GM12878 (cell line): ENCODE measurements at regions of chr6 and their contacts with region 1.

Region 1: DNA sequence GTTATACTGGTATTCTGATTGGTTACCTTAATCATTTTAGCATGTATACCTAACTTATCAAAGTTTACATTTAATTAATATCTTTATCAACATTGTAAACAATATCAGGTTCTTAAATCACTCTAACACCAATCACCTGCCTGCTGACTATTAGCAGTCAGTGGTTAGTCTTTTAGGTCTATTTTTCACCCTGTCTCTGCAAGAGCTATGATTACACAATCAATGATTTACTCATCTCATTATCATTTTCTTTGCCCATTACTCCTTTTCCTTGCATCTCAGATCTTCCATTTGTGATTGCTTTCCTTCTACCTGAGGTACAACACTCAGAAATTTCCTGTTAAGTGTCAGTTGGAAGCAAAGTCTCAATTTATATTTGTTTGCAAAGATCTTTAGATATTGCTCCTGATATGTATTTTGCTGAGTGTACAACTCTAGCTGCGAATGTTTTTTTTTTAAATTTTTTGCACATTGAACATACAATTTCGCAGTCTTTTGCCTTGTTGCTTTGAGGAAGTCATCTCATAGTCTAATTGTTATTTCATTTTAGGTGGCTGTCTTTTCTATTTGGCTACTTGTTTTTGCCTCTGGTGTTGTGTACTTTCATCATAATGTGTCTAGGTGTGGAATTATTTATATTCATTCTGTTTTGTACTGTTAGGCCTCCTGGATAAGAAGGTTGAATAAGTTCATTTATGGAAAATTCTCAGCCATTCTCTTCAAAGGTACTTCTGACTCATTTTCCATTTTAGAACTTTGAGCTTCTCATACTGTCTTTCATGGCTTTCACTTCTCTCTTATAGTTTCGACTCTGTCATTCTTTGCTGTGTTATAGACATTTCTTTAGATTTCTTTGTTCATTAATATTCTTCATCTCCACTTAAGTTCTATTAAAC is 104.9 kb upstream of the CEP162 start:
- DNase-seq: peak; percentile 24
- ATAC-seq: peak; percentile 97
- H3K4me3 ChIP-seq: no peak overlapping the region
- H3K27ac ChIP-seq: peak overlapping the region; percentile 38; the same call in 1 of the 2 replicates
- H3K4me1 ChIP-seq: peaks cover 6% of the 10 kb centered on the region; the same call in 1 of the 2 replicates
- H3K27me3 ChIP-seq: no peaks in the 10 kb centered on the region
- CTCF ChIP-seq: no peak
- EP300 ChIP-seq: peak; percentile 53 to 83
- POLR2A ChIP-seq: no peak
- RAD21 ChIP-seq: no peak

Region 2: DNA sequence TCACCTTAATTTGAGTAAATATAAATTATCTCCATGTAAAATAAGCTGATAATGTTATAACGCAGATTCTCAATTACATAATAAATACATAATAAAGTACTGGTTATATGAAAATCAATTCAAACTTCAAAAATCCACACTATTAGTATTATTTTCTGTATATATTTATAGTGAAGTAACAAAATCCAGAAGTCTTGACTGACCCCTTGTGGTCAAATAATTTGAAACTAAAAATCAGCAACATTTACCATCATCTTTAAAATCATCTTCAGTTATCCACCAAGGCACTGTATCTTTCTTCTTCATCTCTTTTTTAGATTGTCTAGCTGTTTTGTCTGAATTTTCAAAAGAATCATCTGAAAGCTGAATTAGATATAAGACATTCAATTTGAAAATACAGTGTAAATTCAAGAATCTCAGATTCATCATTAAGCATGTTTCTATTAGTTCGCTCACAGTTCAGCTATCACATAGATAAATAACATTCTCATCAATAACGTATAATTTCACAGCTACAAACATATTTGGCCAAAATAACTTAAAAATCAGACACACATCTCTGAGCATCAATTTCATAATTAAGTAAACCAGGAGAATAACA is 111.5 kb before region 1 on chr6:
- CTCF ChIA-PET with region 1: no interaction called
- POLR2A ChIA-PET with region 1: no interaction called
- RAD21 ChIA-PET with region 1: no interaction called
- SMC1A ChIA-PET with region 1: no interaction called
- in situ Hi-C with region 1: no loop called
- intact Hi-C with region 1: no loop called
- DNase-seq: no peak
- ATAC-seq: 0 out of 3 replicates have a peak, but pooled peaks have one; percentile 39
- H3K4me3 ChIP-seq: no peak overlapping the region
- H3K27ac ChIP-seq: no peak overlapping the region
- H3K4me1 ChIP-seq: no peaks in the 10 kb centered on the region
- H3K27me3 ChIP-seq: no peaks in the 10 kb centered on the region
- CTCF ChIP-seq: peak; percentile 30 to 52 (median 36); a peak in 3 of 6 replicates
- EP300 ChIP-seq: no peak
- POLR2A ChIP-seq: no peak
- RAD21 ChIP-seq: peak; percentile 64

Region 3: DNA sequence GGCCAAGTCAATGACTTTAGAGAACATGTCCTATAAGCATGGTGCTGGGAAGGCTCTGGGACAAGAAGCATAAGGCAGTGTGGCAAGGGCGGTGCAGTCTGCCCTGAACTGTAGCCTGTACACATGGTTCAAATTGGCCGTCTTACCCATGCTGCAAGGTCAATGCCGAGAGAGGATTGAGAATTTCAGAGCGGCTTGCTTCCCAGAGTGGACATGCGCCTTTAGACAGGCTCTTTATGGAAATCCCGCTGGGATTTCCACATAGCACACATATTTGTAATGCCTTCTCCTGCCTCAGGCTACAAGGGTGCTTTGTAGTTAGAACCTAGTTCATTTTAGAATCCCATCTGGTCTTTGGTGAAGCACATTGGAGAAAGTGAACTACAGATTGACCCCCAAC is 68.8 kb before region 1 on chr6:
- CTCF ChIA-PET with region 1: no interaction called
- POLR2A ChIA-PET with region 1: no interaction called
- RAD21 ChIA-PET with region 1: no interaction called
- SMC1A ChIA-PET with region 1: no interaction called
- in situ Hi-C with region 1: no loop called
- intact Hi-C with region 1: no loop called
- DNase-seq: no peak
- ATAC-seq: no peak
- H3K4me3 ChIP-seq: no peak overlapping the region
- H3K27ac ChIP-seq: no peak overlapping the region
- H3K4me1 ChIP-seq: no peaks in the 10 kb centered on the region
- H3K27me3 ChIP-seq: peaks cover 0 to 3% of the 10 kb centered on the region in 2 experiments; a peak in 2 of 4 replicates
- CTCF ChIP-seq: no peak
- EP300 ChIP-seq: no peak
- POLR2A ChIP-seq: no peak
- RAD21 ChIP-seq: no peak

Region 4: DNA sequence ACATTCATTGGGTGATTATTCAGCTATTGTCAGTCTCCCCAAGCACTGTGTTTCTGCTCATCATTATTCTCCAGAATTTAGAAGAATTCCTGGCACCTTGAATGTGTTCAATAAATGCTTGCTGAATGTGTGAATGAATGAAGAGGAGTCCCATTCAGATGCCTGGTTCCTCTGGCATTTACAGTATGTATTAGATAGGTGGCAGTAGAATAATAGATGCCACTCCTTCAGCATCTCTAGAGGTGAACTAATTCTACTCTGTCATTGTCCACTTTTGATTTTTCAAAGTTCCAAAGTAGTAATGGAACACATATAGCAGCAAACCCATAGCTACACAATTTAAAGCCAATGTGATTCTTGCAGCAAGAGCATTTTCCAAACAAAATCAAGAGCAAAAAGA is 14.0 kb after region 1 on chr6:
- CTCF ChIA-PET with region 1: interaction called, 5 read pairs
- POLR2A ChIA-PET with region 1: interaction called, 3 read pairs
- RAD21 ChIA-PET with region 1: interaction called, 6 read pairs
- SMC1A ChIA-PET with region 1: interaction called, 21 read pairs
- in situ Hi-C with region 1: no loop called
- intact Hi-C with region 1: no loop called
- DNase-seq: no peak
- ATAC-seq: peak; percentile 33; the same call in 1 of the 3 replicates
- H3K4me3 ChIP-seq: no peak overlapping the region
- H3K27ac ChIP-seq: no peak overlapping the region
- H3K4me1 ChIP-seq: no peaks in the 10 kb centered on the region
- H3K27me3 ChIP-seq: no peaks in the 10 kb centered on the region
- CTCF ChIP-seq: no peak; a peak in 1 of 6 replicates
- EP300 ChIP-seq: no peak
- POLR2A ChIP-seq: no peak
- RAD21 ChIP-seq: no peak

Region 5: GRCh38 chr6:84356907-84357306 is 24.5 kb after region 1 on chr6:
- CTCF ChIA-PET with region 1: interaction called, 4 read pairs
- POLR2A ChIA-PET with region 1: no interaction called
- RAD21 ChIA-PET with region 1: interaction called, 14 read pairs
- SMC1A ChIA-PET with region 1: interaction called, 7 read pairs
- in situ Hi-C with region 1: no loop called
- intact Hi-C with region 1: no loop called
- DNase-seq: no peak
- ATAC-seq: no peak
- H3K4me3 ChIP-seq: no peak overlapping the region
- H3K27ac ChIP-seq: no peak overlapping the region
- H3K4me1 ChIP-seq: no peaks in the 10 kb centered on the region
- H3K27me3 ChIP-seq: no peaks in the 10 kb centered on the region
- CTCF ChIP-seq: no peak
- EP300 ChIP-seq: no peak
- POLR2A ChIP-seq: no peak
- RAD21 ChIP-seq: no peak

Region 6: DNA sequence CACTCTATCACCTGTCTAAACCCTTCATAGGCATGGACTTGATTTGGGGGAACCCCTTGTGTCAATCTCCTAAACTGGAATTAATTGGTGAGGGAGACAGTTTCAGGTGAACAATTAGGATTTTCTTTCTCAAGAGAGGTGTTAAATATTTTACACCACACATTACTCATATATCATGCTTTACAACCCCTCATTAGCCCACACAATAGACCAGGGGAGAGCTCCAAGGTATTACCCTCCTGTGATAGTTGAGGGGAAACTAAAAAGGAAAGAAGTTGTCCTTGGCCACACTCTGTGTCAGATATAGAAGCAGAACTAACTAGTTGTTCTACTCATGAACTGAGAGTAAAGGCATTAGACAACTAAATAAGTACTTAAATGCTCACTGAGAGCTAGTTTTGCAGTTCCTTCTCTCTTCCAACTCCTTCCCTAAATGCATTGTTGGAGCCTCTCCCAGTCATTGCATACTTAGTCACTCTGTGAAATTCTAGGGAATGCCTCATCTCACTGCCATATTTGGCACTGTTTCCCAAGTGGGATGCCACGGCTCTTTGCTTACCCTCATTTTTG is 78.8 kb after region 1 on chr6:
- CTCF ChIA-PET with region 1: interaction called, 3 read pairs
- POLR2A ChIA-PET with region 1: interaction called, 4 read pairs
- RAD21 ChIA-PET with region 1: interaction called, 13 read pairs
- SMC1A ChIA-PET with region 1: interaction called, 8 read pairs
- in situ Hi-C with region 1: no loop called
- intact Hi-C with region 1: no loop called
- DNase-seq: no peak
- ATAC-seq: peak; percentile 96
- H3K4me3 ChIP-seq: no peak overlapping the region
- H3K27ac ChIP-seq: no peak overlapping the region
- H3K4me1 ChIP-seq: no peaks in the 10 kb centered on the region
- H3K27me3 ChIP-seq: no peaks in the 10 kb centered on the region
- CTCF ChIP-seq: no peak
- EP300 ChIP-seq: peak; percentile 82 to 88; a peak in 2 of 4 replicates
- POLR2A ChIP-seq: no peak
- RAD21 ChIP-seq: no peak

Region 7: DNA sequence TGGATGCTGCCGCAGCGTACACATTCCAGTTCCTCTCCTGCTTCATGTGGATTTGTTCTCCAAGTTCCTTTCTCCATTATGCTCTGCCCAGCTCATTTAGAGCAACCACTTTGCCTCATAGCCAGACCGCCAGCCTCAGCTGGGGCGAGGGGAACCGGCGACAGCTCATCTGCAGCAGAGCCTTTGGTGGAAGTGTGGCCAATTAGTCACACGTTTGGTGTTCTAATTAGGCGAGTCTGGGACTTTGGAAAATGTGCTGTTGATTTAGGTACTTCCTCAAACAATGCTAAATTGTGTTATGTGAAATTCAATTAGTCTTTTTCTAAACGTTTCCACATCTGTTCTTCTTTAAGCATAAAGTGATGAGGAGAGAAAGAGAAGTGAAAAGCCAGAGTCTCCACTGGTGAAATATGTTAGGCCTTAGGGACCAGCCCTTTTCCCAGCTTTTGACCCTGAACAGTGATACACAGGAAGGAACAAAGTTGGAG is 214.1 kb after region 1 on chr6:
- CTCF ChIA-PET with region 1: no interaction called
- POLR2A ChIA-PET with region 1: no interaction called
- RAD21 ChIA-PET with region 1: interaction called, 13 read pairs
- SMC1A ChIA-PET with region 1: no interaction called
- in situ Hi-C with region 1: no loop called
- intact Hi-C with region 1: loop called (anchors 10 kb)
- DNase-seq: peak; percentile 52
- ATAC-seq: peak; percentile 87
- H3K4me3 ChIP-seq: no peak overlapping the region
- H3K27ac ChIP-seq: no peak overlapping the region
- H3K4me1 ChIP-seq: no peaks in the 10 kb centered on the region
- H3K27me3 ChIP-seq: no peaks in the 10 kb centered on the region
- CTCF ChIP-seq: no peak
- EP300 ChIP-seq: peak; percentile 84 to 90
- POLR2A ChIP-seq: no peak
- RAD21 ChIP-seq: no peak